ENCODE measurements at regions of chr10 and their contacts with region 1.

Region 1: GRCh38 chr10:89217057-89217990 is 10.2 kb upstream of the CH25H start:
- DNase-seq: no peak
- H3K4me3 ChIP-seq: no peak overlapping the region
- CTCF ChIP-seq: peak; percentile 45

Region 2: GRCh38 chr10:88944813-88945212 is 272.5 kb before region 1 on chr10:
- CTCF ChIA-PET with region 1: interaction called, 15 read pairs
- POLR2A ChIA-PET with region 1: no interaction called
- DNase-seq: no peak
- H3K4me3 ChIP-seq: no peak overlapping the region
- CTCF ChIP-seq: no peak

Region 3: GRCh38 chr10:89022734-89023133 is 194.6 kb before region 1 on chr10:
- CTCF ChIA-PET with region 1: interaction called, 73 read pairs
- POLR2A ChIA-PET with region 1: no interaction called
- DNase-seq: no peak
- H3K4me3 ChIP-seq: no peak overlapping the region
- CTCF ChIP-seq: no peak

Region 4: DNA sequence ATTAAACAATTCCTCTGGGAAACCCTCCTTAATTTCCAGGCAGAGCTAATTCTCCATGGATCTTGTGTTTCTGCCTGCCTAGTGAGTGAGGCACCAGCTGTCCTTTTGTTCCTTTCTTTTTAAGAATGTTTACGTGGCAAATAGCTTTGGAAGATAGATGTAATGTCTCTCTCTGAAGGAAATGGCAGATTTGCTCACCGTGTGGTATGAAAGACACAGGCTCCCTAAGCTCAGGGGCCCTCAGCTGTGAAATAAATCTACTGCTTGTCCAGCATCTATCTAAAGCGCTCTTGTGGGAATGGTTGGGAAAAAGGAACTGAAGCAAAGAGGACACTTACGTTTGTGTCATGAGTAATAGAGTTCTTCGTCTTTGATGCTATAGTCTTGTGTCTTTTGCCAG is 162.2 kb before region 1 on chr10:
- CTCF ChIA-PET with region 1: interaction called, 14 read pairs
- POLR2A ChIA-PET with region 1: no interaction called
- DNase-seq: no peak
- H3K4me3 ChIP-seq: no peak overlapping the region
- CTCF ChIP-seq: no peak

Region 5: GRCh38 chr10:89251409-89252224 is 34.3 kb after region 1 on chr10 and contains the start of gene LIPA:
- CTCF ChIA-PET with region 1: interaction called, 26 read pairs
- POLR2A ChIA-PET with region 1: no interaction called
- DNase-seq: peak; percentile 81
- H3K4me3 ChIP-seq: peak within 1 kb of the TSS; percentile 83
- CTCF ChIP-seq: no peak

Measured in AG04449 (cell line).